ENCODE measurements at regions of chr3 and their contacts with region 1.

Region 1: GRCh38 chr3:58414538-58415197 is 19.0 kb downstream of the PDHB start:
- DNase-seq: peak; percentile 67
- ATAC-seq: peak; percentile 89
- H3K4me3 Mint-ChIP-seq: no peak overlapping the region
- H3K27ac Mint-ChIP-seq: no peak overlapping the region
- H3K4me1 Mint-ChIP-seq: no peaks in the 10 kb centered on the region
- H3K27me3 Mint-ChIP-seq: no peaks in the 10 kb centered on the region
- CTCF ChIP-seq: peak; percentile 62

Region 2: GRCh38 chr3:58317811-58318210 is 96.9 kb before region 1 on chr3:
- CTCF ChIA-PET with region 1: interaction called, 17 read pairs
- POLR2A ChIA-PET with region 1: no interaction called
- intact Hi-C with region 1: loop called (anchors 5 kb)
- DNase-seq: no peak
- ATAC-seq: no peak
- H3K4me3 Mint-ChIP-seq: no peak overlapping the region
- H3K27ac Mint-ChIP-seq: no peak overlapping the region
- H3K4me1 Mint-ChIP-seq: peaks cover 16% of the 10 kb centered on the region
- H3K27me3 Mint-ChIP-seq: no peaks in the 10 kb centered on the region
- CTCF ChIP-seq: no peak

Region 3: DNA sequence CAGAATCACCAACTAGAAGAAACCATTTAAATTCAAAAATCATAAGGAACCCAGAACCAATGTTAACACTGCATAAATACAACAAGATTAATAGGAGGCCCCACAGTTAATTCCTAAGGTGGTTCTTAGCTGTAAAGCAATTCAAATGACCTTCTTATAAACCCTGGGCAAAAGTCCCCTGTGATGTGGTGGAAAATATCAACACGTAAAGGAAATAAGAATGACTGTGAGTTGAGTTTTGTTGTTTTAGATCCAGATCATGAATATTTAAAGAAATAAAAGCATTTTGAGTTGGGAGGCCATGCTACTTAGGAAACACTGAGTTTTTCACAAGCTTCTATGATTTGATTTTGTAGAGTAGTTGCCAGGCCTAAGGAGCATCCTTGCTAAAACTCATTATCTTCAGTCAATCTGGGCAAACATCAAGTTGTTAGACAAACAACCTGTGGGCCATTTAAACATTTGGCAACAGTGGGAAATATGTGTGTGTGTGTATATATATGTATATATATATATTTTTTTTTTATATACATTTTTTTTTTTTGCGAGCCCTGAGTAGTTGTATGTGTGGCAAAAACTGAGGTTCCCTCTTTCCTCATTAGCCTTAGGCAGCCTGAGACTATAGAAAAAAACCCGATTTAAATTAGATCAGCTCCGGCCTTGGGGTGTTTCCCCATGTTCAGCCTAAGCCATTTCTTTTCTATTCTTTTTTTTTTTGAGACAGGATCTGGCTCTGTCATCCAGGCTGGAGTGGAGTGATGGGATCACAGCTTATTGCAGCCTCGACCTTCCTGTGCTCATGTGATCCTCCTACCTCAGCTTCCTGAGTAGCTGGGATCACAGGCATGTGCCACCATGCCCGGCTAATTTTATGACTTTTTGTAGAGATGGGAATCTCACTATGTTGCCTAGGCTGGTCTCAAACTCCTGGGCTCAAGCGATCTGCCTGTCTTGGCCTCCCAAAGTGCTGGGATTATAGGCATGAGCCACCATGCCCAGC is 90.0 kb before region 1 on chr3:
- CTCF ChIA-PET with region 1: interaction called, 14 read pairs
- POLR2A ChIA-PET with region 1: no interaction called
- intact Hi-C with region 1: loop called (anchors 5 kb)
- DNase-seq: peak; percentile 37
- ATAC-seq: peak; percentile 63
- H3K4me3 Mint-ChIP-seq: peak overlapping the region; percentile 2
- H3K27ac Mint-ChIP-seq: peak overlapping the region; percentile 87
- H3K4me1 Mint-ChIP-seq: peaks cover 40% of the 10 kb centered on the region
- H3K27me3 Mint-ChIP-seq: no peaks in the 10 kb centered on the region
- CTCF ChIP-seq: no peak

Region 4: DNA sequence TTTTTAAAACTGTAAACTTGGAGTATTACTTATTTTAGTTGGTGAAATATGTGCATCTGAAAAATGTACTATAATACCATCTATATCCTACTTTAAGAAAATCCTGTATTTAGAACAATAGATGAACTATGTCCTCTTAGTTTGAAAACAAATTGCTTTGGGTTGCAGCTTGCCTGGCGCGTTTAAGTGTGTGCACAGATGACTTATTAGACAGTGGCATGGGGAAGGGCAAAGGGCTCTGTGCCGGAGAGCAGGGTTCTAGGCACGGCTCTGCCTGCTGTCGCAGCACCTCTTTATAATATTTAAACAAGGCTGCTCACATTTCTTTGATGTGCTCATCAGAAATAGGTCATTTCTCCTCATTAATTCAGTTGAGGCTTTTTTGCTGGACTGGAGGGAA is 72.0 kb before region 1 on chr3:
- CTCF ChIA-PET with region 1: no interaction called
- POLR2A ChIA-PET with region 1: no interaction called
- intact Hi-C with region 1: no loop called
- DNase-seq: no peak
- ATAC-seq: no peak
- H3K4me3 Mint-ChIP-seq: no peak overlapping the region
- H3K27ac Mint-ChIP-seq: no peak overlapping the region
- H3K4me1 Mint-ChIP-seq: peaks cover 12% of the 10 kb centered on the region
- H3K27me3 Mint-ChIP-seq: no peaks in the 10 kb centered on the region
- CTCF ChIP-seq: no peak

Region 5: GRCh38 chr3:58433400-58434169 is 18.9 kb after region 1 on chr3 and contains the start of gene PDHB:
- CTCF ChIA-PET with region 1: interaction called, 13 read pairs
- POLR2A ChIA-PET with region 1: interaction called, 3 read pairs
- intact Hi-C with region 1: no loop called
- DNase-seq: peak; percentile 91
- ATAC-seq: peak; percentile 97
- H3K4me3 Mint-ChIP-seq: peak within 1 kb of the TSS; percentile 96
- H3K27ac Mint-ChIP-seq: peak within 1 kb of the TSS; percentile 93
- H3K4me1 Mint-ChIP-seq: peaks cover 24% of the 10 kb centered on the region
- H3K27me3 Mint-ChIP-seq: no peaks in the 10 kb centered on the region
- CTCF ChIP-seq: no peak
- total RNA-seq, gene PDHB: 53.9 to 58.8 TPM